ENCODE measurements at regions of chr3 and their contacts with region 1.

Region 1: GRCh38 chr3:40923143-40923542 is 276.2 kb upstream of the CTNNB1 start:
- DNase-seq: no peak
- ATAC-seq: peak; percentile 92
- H3K4me3 Mint-ChIP-seq: no peak overlapping the region
- H3K27ac Mint-ChIP-seq: no peak overlapping the region
- H3K4me1 Mint-ChIP-seq: no peaks in the 10 kb centered on the region
- H3K27me3 Mint-ChIP-seq: peaks cover 14% of the 10 kb centered on the region

Region 2: DNA sequence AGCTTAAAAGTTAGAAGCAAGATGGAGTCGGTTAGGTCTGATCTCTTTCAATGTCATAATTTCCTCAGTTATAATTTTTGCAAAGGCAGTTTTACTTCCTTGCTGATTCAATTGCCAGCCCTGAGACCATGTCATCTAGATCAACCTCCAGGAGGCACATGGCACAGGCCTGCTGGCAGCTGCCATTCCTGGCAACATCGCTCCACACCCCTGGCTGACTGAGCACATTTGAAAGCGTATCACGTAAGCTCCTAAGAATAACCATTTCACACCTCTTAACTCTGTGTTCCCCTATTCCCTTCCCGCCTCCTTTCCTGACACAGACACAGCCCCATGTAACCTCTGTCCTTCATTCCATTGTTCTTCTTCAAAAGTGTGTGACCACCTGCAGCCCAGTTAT is 37.7 kb before region 1 on chr3:
- CTCF ChIA-PET with region 1: no interaction called
- POLR2A ChIA-PET with region 1: no interaction called
- intact Hi-C with region 1: no loop called
- DNase-seq: no peak
- ATAC-seq: no peak
- H3K4me3 Mint-ChIP-seq: no peak overlapping the region
- H3K27ac Mint-ChIP-seq: no peak overlapping the region
- H3K4me1 Mint-ChIP-seq: no peaks in the 10 kb centered on the region
- H3K27me3 Mint-ChIP-seq: no peaks in the 10 kb centered on the region

Region 3: GRCh38 chr3:40961104-40961857 is 38.1 kb after region 1 on chr3:
- CTCF ChIA-PET with region 1: no interaction called
- POLR2A ChIA-PET with region 1: no interaction called
- intact Hi-C with region 1: loop called in 1 of 2 experiments (anchors 2 kb)
- DNase-seq: peak; percentile 20
- ATAC-seq: peak; percentile 83
- H3K4me3 Mint-ChIP-seq: no peak overlapping the region
- H3K27ac Mint-ChIP-seq: no peak overlapping the region
- H3K4me1 Mint-ChIP-seq: peaks cover 11% of the 10 kb centered on the region
- H3K27me3 Mint-ChIP-seq: peaks cover 16% of the 10 kb centered on the region